ENCODE measurements at regions of chr9 and their contacts with region 1.

Region 1: DNA sequence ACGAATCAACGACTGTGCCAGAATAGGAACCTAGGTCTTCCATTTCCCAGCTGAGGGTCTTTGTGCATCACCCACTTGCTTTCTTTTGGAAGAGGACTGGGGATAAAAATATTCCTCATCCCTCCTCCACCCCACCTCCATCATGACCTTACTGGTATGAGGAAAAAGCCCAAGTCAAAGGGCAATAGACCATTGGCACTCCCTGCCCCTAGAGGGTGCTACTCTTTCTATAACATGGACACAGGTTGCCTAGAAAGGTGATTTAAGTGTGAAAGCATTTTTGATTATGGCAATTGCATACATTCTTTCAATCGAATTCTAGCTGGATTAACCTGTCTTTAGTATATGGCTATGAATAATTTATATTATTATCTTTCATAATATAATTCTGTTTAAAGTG is 22.8 kb upstream of the ZNF618 start:
- DNase-seq: no peak
- H3K4me3 ChIP-seq: no peak overlapping the region
- H3K27ac ChIP-seq: no peak overlapping the region
- H3K4me1 ChIP-seq: peaks cover 0 to 5% (median 1%) of the 10 kb centered on the region in 4 experiments; a peak in 3 of 7 replicates
- H3K27me3 ChIP-seq: no peaks in the 10 kb centered on the region
- CTCF ChIP-seq: peak; percentile 43 to 89 (median 63)
- EP300 ChIP-seq: no peak
- POLR2A ChIP-seq: no peak
- RAD21 ChIP-seq: peak; percentile 70 to 77

Region 2: DNA sequence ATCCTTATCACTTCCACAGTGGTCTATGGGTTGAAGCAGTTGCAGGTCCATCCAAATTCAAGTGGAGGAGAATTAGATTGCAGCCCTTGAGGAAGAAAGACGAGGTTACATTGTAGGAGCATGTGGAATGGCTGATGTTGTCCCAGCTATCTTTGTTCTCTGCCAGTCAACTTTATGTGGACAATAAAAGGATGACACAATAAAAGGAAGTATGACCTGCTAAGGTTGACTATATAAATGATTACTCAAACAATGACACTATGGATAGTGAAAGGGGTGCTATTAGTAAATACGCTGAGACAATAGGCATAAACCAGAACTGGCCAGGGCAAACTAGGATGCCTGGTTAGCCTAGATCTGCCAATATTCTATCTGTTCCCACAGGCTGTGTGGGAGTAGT is 10.0 kb after region 1 on chr9:
- CTCF ChIA-PET with region 1: interaction called, 11 read pairs
- POLR2A ChIA-PET with region 1: no interaction called
- DNase-seq: no peak
- H3K4me3 ChIP-seq: no peak overlapping the region
- H3K27ac ChIP-seq: no peak overlapping the region
- H3K4me1 ChIP-seq: peaks cover 0 to 5% (median 2%) of the 10 kb centered on the region in 4 experiments; a peak in 3 of 7 replicates
- H3K27me3 ChIP-seq: no peaks in the 10 kb centered on the region
- CTCF ChIP-seq: no peak
- EP300 ChIP-seq: no peak
- POLR2A ChIP-seq: no peak
- RAD21 ChIP-seq: no peak

Region 3: GRCh38 chr9:113882636-113883164 is 29.4 kb after region 1 on chr9:
- CTCF ChIA-PET with region 1: interaction called, 13 read pairs
- POLR2A ChIA-PET with region 1: no interaction called
- DNase-seq: no peak
- H3K4me3 ChIP-seq: no peak overlapping the region
- H3K27ac ChIP-seq: no peak overlapping the region
- H3K4me1 ChIP-seq: peaks cover 9 to 21% (median 15%) of the 10 kb centered on the region in 4 experiments
- H3K27me3 ChIP-seq: no peaks in the 10 kb centered on the region
- CTCF ChIP-seq: no peak
- EP300 ChIP-seq: no peak
- POLR2A ChIP-seq: no peak
- RAD21 ChIP-seq: no peak